OCI-LY7 (cell line): ENCODE measurements at regions of chr3 and their contacts with region 1.

Region 1: DNA sequence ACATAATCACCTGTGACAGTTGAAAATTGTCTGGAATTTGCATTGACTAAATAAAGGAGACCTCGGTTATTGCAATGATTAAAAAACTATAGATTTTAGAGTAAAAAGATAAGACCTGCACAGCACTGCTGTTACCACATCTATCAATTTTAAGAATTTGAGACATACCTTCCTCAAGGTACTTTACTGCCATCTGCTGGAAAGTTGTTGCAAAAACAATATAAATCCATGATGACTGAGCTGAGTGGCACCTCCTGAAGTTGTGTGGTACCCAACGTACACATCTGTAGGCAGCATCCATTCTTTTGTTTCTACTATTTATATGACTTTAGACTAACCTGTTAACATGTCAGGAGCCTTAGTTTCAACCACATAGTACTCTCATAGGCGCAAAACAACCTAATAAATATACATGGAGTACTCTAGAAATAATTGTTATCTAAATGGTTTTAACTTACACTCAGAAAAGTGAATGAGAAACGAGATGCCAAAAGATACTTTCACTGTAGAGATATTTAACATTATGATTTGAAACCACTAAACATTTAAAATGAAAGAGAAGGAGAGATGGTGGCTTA is 106.7 kb downstream of the GHSR start:
- DNase-seq: peak; percentile 72
- H3K4me3 ChIP-seq: no peak overlapping the region
- H3K27ac ChIP-seq: no peak overlapping the region
- H3K4me1 ChIP-seq: no peaks in the 10 kb centered on the region
- CTCF ChIP-seq: peak; percentile 89

Region 2: GRCh38 chr3:171646357-171647133 is 695.0 kb before region 1 on chr3:
- CTCF ChIA-PET with region 1: no interaction called
- POLR2A ChIA-PET with region 1: no interaction called
- intact Hi-C with region 1: loop called (anchors 5 kb)
- DNase-seq: peak; percentile 18
- H3K4me3 ChIP-seq: no peak overlapping the region
- H3K27ac ChIP-seq: no peak overlapping the region
- H3K4me1 ChIP-seq: no peaks in the 10 kb centered on the region
- CTCF ChIP-seq: peak; percentile 70

Region 3: GRCh38 chr3:171676601-171677175 is 664.9 kb before region 1 on chr3:
- CTCF ChIA-PET with region 1: no interaction called
- POLR2A ChIA-PET with region 1: no interaction called
- intact Hi-C with region 1: no loop called
- DNase-seq: no peak
- H3K4me3 ChIP-seq: no peak overlapping the region
- H3K27ac ChIP-seq: no peak overlapping the region
- H3K4me1 ChIP-seq: no peaks in the 10 kb centered on the region
- CTCF ChIP-seq: no peak

Region 4: GRCh38 chr3:171703756-171704401 is 637.7 kb before region 1 on chr3:
- CTCF ChIA-PET with region 1: no interaction called
- POLR2A ChIA-PET with region 1: no interaction called
- intact Hi-C with region 1: loop called (anchors 1 kb)
- DNase-seq: peak; percentile 43
- H3K4me3 ChIP-seq: no peak overlapping the region
- H3K27ac ChIP-seq: no peak overlapping the region
- H3K4me1 ChIP-seq: no peaks in the 10 kb centered on the region
- CTCF ChIP-seq: peak; percentile 82

Region 5: DNA sequence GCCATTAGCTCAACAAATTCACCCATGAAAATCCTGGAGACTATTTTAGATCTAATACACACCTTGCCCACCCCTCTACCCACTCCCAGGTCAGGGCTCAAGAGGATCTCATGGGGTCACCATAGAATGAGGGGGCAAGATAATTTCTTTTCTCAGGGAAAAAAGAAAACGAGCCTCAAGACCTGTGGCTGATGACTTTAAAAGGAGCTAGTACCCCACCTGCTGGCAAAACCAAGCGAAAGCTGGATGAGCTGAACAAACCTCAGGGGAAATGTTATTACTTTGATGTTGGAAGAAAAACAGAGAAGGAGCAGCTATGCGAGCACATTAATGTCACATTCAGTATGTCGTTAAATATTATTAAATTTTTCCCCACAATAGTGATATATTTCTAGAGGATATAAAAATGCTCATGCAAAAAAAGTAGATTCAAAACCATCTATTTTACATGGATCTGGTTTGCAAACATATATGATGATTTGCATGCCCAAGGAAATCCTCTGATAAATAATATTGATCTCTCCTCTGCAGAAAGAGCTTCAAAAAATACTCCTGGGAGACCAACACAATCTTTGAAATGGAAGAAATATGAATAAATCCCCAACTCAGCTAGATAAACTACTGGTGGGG is 569.0 kb before region 1 on chr3:
- CTCF ChIA-PET with region 1: interaction called, 3 read pairs
- POLR2A ChIA-PET with region 1: no interaction called
- intact Hi-C with region 1: loop called (anchors 10 kb)
- DNase-seq: peak; percentile 56
- H3K4me3 ChIP-seq: no peak overlapping the region
- H3K27ac ChIP-seq: no peak overlapping the region
- H3K4me1 ChIP-seq: no peaks in the 10 kb centered on the region
- CTCF ChIP-seq: peak; percentile 77

Region 6: DNA sequence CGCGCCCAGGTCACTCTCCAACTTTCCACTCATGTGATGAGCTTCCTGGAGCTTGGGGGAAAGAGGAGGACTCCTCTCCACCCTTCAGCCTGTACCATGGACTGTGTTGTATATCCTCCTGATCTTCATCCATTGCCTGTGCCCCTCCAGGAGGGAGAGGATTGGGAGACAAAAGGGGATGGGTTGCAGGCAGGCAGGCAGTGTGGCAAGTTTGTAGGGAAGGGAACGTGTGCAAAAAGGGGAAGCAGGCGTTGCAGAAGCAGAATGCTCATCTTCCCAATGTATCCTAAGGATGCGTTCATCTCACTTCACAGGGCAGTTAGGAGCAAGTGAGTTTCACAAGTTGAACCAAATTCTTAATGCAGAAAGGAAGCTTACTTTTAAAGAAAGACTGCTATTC is 134.8 kb after region 1 on chr3:
- CTCF ChIA-PET with region 1: no interaction called
- POLR2A ChIA-PET with region 1: no interaction called
- intact Hi-C with region 1: loop called (anchors 5 kb)
- DNase-seq: no peak
- H3K4me3 ChIP-seq: no peak overlapping the region
- H3K27ac ChIP-seq: no peak overlapping the region
- H3K4me1 ChIP-seq: no peaks in the 10 kb centered on the region
- CTCF ChIP-seq: no peak